ENCODE measurements at regions of chr7 and their contacts with region 1.

Region 1: DNA sequence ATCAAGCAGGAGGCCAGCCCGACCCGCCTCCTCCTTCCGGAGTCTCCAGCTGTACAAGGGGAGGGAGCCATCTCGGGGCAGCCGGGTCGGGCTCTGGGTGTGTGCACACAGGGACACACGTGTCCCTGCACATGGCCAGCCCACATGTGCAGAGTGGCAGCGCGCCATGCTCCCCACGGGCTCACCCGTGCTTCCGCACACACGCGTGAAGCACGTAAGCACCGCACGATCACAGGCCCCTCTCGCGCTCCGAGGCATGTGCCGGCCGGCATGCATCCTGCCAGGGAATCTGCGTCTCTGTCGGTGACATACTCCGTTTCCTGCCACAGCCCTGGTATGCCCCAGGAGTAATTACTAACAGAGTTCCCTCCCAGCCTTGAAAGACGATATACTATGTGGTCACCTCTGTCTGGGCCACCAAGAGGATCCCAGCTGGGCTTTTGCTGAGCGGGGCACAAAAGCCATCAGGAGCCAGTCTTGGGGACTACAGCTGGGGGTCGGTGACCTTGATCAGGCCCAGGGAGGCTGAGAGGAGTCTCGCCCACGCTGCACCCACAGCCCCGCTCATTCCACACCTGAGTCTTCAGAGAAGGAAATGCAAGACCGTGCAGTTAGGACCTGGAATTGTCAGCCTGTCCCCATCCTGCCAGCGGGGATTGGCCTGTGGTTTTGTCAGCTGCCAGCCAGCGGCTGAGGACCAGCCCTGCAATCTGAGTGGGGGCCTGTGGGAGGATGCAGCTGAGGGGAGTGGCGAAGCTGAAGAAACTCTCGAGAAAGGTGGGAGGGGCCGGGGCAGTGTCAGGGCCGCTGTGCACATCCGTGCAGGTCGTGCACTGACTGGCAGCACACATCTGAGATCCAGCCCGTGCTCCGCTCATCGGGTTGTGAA is 11.0 kb upstream of the LFNG start:
- DNase-seq: peak; percentile 83
- H3K4me3 Mint-ChIP-seq: peak overlapping the region; percentile 59
- H3K27ac Mint-ChIP-seq: peak overlapping the region; percentile 37
- H3K4me1 Mint-ChIP-seq: peaks cover 55% of the 10 kb centered on the region
- H3K27me3 Mint-ChIP-seq: no peaks in the 10 kb centered on the region

Region 2: GRCh38 chr7:1459522-1459892 is 1049.1 kb before region 1 on chr7:
- CTCF ChIA-PET with region 1: no interaction called
- intact Hi-C with region 1: loop called (anchors 5 kb)
- DNase-seq: peak; percentile 98
- H3K4me3 Mint-ChIP-seq: no peak overlapping the region
- H3K27ac Mint-ChIP-seq: no peak overlapping the region
- H3K4me1 Mint-ChIP-seq: peaks cover 19% of the 10 kb centered on the region
- H3K27me3 Mint-ChIP-seq: no peaks in the 10 kb centered on the region

Measured in activated naive CD4-positive, alpha-beta T cell treated with anti-CD3 and anti-CD28 coated beads for 36 hours (primary cell).